Activated T-helper 1 cell treated with anti-CD3 and anti-CD28 coated beads, Interleukin-12 subunit alpha, Interleukin-12 subunit beta, Interleukin-2, Interleukin-4 antibody, amounts not matched to agents 30 ng/mL and 10 ng/mL and 1 ng/mL, durations not matched to agents 14 hours and 24 hours and 36 hours (primary cell): ENCODE measurements at regions of chr16 and their contacts with region 1.

Region 1: GRCh38 chr16:55471448-55472097 is 7.4 kb upstream of the MMP2 start:
- DNase-seq: no peak
- H3K4me3 Mint-ChIP-seq: no peak overlapping the region
- H3K27ac Mint-ChIP-seq: peak overlapping the region; percentile 67
- H3K4me1 Mint-ChIP-seq: peaks cover 17% of the 10 kb centered on the region
- H3K27me3 Mint-ChIP-seq: no peaks in the 10 kb centered on the region

Region 2: GRCh38 chr16:55499951-55500529 is 28.5 kb after region 1 on chr16:
- intact Hi-C with region 1: loop called (anchors 1 kb)
- DNase-seq: peak; percentile 26
- H3K4me3 Mint-ChIP-seq: peak overlapping the region; percentile 30
- H3K27ac Mint-ChIP-seq: no peak overlapping the region
- H3K4me1 Mint-ChIP-seq: peaks cover 17% of the 10 kb centered on the region
- H3K27me3 Mint-ChIP-seq: peaks cover 2% of the 10 kb centered on the region

Region 3: GRCh38 chr16:55543472-55543871 is 71.9 kb after region 1 on chr16:
- intact Hi-C with region 1: no loop called
- DNase-seq: no peak
- H3K4me3 Mint-ChIP-seq: no peak overlapping the region
- H3K27ac Mint-ChIP-seq: no peak overlapping the region
- H3K4me1 Mint-ChIP-seq: no peaks in the 10 kb centered on the region
- H3K27me3 Mint-ChIP-seq: no peaks in the 10 kb centered on the region